CD8-positive, alpha-beta T cell (primary cell): ENCODE measurements at regions of chr20 and their contacts with region 1.

Region 1: DNA sequence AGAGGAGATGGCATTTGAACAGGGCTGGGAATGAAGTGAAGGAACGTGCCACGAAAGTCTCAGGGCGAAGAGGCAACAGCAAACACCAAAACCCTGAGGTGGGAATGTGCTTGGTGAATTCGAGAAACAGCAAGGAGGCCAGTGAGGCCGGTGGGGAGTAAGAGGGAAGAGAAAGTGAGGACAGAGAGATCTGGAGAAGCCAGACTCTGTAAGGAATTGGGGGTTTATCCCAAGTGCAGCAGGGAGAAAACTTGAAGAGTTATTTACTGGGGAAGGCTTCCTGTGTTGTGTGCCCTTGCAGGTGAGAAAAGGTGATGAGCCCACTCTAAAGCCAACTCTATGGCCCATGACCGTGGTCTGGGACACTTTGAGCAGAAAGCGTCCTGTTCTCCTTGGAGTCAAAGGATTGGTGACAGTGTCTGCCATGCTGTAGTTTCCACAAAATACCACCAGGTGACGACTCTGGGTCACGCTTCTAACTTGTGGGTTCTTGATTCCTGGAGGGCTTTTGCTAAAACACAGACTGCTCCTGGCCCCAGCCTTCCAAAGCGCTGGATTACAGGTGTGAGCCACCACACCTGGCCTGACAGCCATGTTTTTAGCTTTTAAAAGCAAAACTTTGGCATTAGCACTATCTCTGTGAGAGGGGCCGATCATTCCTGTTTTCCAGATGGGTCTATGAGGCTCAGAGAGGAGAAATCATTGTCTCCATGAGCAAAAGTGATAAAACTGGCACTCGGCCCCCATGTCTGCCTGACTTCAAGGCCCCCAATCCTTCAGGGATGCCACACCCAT is 18.0 kb upstream of the CSNK2A1 start:
- DNase-seq: peak in 7 of 9 experiments; percentile 15 to 57 (median 41)
- ATAC-seq: peak; percentile 59
- H3K4me3 ChIP-seq: no peak overlapping the region
- H3K4me3 Mint-ChIP-seq: no peak overlapping the region
- H3K27ac ChIP-seq: no peak overlapping the region
- H3K27ac Mint-ChIP-seq: no peak overlapping the region
- H3K4me1 ChIP-seq: no peaks in the 10 kb centered on the region
- H3K4me1 Mint-ChIP-seq: no peaks in the 10 kb centered on the region
- H3K27me3 ChIP-seq: no peaks in the 10 kb centered on the region
- H3K27me3 Mint-ChIP-seq: peaks cover 6% of the 10 kb centered on the region
- CTCF ChIP-seq: peak; percentile 77

Region 2: DNA sequence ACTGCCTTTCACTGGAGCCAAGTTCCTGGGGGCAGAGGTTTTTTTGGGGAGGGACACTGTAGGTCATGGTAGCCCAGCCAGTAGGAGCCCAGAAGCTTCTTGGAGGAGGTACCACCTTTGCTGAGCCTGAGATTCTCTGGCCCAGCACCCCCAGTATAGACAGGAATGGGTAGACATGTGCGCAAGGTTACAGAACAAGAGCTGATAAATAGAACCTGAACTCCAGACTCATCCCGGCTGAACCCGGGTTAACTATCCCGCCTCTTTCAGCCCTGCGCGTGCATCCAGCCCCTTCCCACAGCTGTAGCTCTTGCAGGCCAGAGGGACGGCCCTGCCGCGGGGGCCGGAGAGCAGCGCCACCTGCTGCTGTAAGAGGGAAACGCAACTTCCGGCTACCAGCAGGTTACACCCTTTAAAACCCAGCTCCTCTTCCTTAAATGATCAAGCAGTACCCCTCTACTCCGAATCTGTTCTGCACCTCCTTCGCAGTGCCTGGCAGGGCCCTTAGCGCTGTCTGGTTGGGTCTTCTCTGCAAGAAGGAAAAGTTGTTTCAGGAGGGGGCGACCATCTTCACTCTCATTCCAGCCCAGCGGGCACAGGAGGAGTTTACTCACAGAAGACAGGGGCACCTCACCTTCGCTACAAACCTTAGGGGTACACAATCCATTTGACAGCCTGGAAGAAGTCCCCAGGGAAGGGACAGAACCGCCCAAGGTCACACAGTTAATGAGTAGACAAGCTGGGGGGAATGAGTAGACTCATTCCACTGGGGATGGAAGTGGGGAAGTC is 83.9 kb after region 1 on chr20:
- CTCF ChIA-PET with region 1: interaction called, 6 read pairs
- POLR2A ChIA-PET with region 1: no interaction called
- intact Hi-C with region 1: loop called in 1 of 2 experiments (anchors 1 kb)
- DNase-seq: peak; percentile 31 to 74 (median 63)
- ATAC-seq: peak; percentile 89
- H3K4me3 ChIP-seq: no peak overlapping the region
- H3K4me3 Mint-ChIP-seq: no peak overlapping the region
- H3K27ac ChIP-seq: no peak overlapping the region
- H3K27ac Mint-ChIP-seq: no peak overlapping the region
- H3K4me1 ChIP-seq: peaks cover 6% of the 10 kb centered on the region
- H3K4me1 Mint-ChIP-seq: peaks cover 14% of the 10 kb centered on the region
- H3K27me3 ChIP-seq: no peaks in the 10 kb centered on the region
- H3K27me3 Mint-ChIP-seq: peaks cover 23% of the 10 kb centered on the region
- CTCF ChIP-seq: peak; percentile 95

Region 3: GRCh38 chr20:733861-734260 is 172.2 kb after region 1 on chr20:
- CTCF ChIA-PET with region 1: interaction called, 4 read pairs
- POLR2A ChIA-PET with region 1: no interaction called
- intact Hi-C with region 1: loop called in 1 of 2 experiments (anchors 10 kb)
- DNase-seq: no peak
- ATAC-seq: no peak
- H3K4me3 ChIP-seq: no peak overlapping the region
- H3K4me3 Mint-ChIP-seq: no peak overlapping the region
- H3K27ac ChIP-seq: no peak overlapping the region
- H3K27ac Mint-ChIP-seq: no peak overlapping the region
- H3K4me1 ChIP-seq: peaks cover 1% of the 10 kb centered on the region
- H3K4me1 Mint-ChIP-seq: peaks cover 1% of the 10 kb centered on the region
- H3K27me3 ChIP-seq: peaks cover 0 to 2% of the 10 kb centered on the region in 2 experiments
- H3K27me3 Mint-ChIP-seq: peaks cover 51% of the 10 kb centered on the region
- CTCF ChIP-seq: no peak